ENCODE measurements at regions of chr2 and their contacts with region 1.

Region 1: DNA sequence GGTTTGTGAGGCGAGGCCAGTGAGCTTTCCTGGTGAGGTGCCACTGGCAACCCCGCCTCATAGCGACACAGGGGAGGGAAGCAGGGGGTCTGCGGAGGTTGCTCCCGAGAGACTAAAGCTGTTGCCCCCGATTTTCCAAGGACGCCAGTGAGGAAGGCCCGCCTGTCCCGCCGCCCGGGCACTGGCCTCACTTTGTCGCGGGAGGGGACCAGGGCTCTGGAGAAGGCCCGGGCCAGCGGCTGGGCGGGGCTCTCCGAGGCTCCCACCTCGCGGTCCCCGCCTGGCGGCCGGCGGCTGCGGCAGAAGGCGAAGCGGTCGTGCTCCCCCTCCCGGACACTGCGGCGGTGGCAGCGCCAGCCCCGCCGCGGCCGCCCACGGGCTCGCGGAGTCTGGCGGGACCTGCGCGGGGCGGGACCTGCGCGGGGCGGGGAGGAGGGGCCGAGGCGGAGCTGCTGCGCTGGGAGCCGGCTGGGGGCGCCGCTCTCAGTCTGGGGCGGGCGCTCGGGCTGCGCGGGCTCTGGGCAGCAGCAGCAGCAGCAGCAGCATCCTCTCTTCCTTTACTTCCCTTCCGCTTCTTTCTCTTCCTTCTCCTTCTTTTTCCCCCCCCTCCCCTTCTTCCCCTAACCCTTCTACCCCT is at the start of gene MAP2:
- DNase-seq: no peak
- ATAC-seq: peak; percentile 99
- H3K4me3 ChIP-seq: peak within 1 kb of the TSS; percentile 25; the same call in 1 of the 2 replicates
- H3K27ac ChIP-seq: no peak within 1 kb of the TSS
- H3K4me1 ChIP-seq: peaks cover 3% of the 10 kb centered on the region; the same call in 1 of the 2 replicates
- H3K27me3 ChIP-seq: no peaks in the 10 kb centered on the region; a peak in 2 of 4 replicates
- CTCF ChIP-seq: peak; percentile 52 to 86 (median 75)
- EP300 ChIP-seq: no peak
- POLR2A ChIP-seq: no peak
- RAD21 ChIP-seq: no peak
- polyA plus RNA-seq, gene MAP2: not detected

Region 2: GRCh38 chr2:209441541-209441940 is 17.9 kb after region 1 on chr2:
- CTCF ChIA-PET with region 1: no interaction called
- POLR2A ChIA-PET with region 1: no interaction called
- RAD21 ChIA-PET with region 1: no interaction called
- SMC1A ChIA-PET with region 1: no interaction called
- in situ Hi-C with region 1: no loop called
- intact Hi-C with region 1: no loop called
- DNase-seq: no peak
- ATAC-seq: no peak
- H3K4me3 ChIP-seq: no peak overlapping the region
- H3K27ac ChIP-seq: no peak overlapping the region
- H3K4me1 ChIP-seq: no peaks in the 10 kb centered on the region
- H3K27me3 ChIP-seq: no peaks in the 10 kb centered on the region
- CTCF ChIP-seq: no peak
- EP300 ChIP-seq: no peak
- POLR2A ChIP-seq: no peak
- RAD21 ChIP-seq: no peak

Region 3: DNA sequence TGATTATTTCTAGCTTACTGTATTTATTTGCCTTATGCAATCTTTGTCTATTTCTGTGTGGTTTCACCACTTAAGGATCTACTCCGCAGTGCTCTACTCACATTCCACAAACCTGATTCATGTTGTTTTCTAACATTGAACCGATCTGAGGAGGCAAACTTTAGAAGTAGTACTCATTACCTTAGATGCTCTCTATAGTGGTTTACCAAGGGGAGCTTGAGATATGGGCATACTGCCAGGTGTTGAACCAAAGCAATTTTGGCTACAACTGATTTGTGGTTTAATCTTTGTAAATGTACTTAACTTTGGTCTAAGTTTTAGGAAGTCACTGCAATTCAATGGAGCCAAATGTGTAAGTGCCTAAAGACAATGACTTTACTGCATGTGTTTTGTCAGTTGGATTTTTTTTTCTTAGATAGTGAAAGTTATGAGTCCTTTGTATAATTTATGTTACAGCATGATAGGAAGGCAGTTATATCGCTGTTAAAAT is 50.3 kb after region 1 on chr2:
- CTCF ChIA-PET with region 1: no interaction called
- POLR2A ChIA-PET with region 1: no interaction called
- RAD21 ChIA-PET with region 1: no interaction called
- SMC1A ChIA-PET with region 1: no interaction called
- in situ Hi-C with region 1: no loop called
- intact Hi-C with region 1: no loop called
- DNase-seq: no peak
- ATAC-seq: no peak
- H3K4me3 ChIP-seq: no peak overlapping the region
- H3K27ac ChIP-seq: no peak overlapping the region
- H3K4me1 ChIP-seq: no peaks in the 10 kb centered on the region
- H3K27me3 ChIP-seq: no peaks in the 10 kb centered on the region
- CTCF ChIP-seq: no peak
- EP300 ChIP-seq: no peak
- POLR2A ChIP-seq: no peak
- RAD21 ChIP-seq: no peak

Region 4: GRCh38 chr2:209556354-209556961 is 132.8 kb after region 1 on chr2:
- CTCF ChIA-PET with region 1: interaction called, 3 read pairs
- POLR2A ChIA-PET with region 1: no interaction called
- RAD21 ChIA-PET with region 1: no interaction called
- SMC1A ChIA-PET with region 1: no interaction called
- in situ Hi-C with region 1: no loop called
- intact Hi-C with region 1: loop called (anchors 5 kb)
- DNase-seq: no peak
- ATAC-seq: peak; percentile 74
- H3K4me3 ChIP-seq: no peak overlapping the region
- H3K27ac ChIP-seq: no peak overlapping the region
- H3K4me1 ChIP-seq: no peaks in the 10 kb centered on the region
- H3K27me3 ChIP-seq: no peaks in the 10 kb centered on the region; a peak in 1 of 4 replicates
- CTCF ChIP-seq: peak; percentile 23 to 49 (median 31); a peak in 4 of 6 replicates
- EP300 ChIP-seq: no peak
- POLR2A ChIP-seq: no peak
- RAD21 ChIP-seq: peak; percentile 71